ENCODE measurements at regions of chr16 and their contacts with region 1.

Region 1: DNA sequence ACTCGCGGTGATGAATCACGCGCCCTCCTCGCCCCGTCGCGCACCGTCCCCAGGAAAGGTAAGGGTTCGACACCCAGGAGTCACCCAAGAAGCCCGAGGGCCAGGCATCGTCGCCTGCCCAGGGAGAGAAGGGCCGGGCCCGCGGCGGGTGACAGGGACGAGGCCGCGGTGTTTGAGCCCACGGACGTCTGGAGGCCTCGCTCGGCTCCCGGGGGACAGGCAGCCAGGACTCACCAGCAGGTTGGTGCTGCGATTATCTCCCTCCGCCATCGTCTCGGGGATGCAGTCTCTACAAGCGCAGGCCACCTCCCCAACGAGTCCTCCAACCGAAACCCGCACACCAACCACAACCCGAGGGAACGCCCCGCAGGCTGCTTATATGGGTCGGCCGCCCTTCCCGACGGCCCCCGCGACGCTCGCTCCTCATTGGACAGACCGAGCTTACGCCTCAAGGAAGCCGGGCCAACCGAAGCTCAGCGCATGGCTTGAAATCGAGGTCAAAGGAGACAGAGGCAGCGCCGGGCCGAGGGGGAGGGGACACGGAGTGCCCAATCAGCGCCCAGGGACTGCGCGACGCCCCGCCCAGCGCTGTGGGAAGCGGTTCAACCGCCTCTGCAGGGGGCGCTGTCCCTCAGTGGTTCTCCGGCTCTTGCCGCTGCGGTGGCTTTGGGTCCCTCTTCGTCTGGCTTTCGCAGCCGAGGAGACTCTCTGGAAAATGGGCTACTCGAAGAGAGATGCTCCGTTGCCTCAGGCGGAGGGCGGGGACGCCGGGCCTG is at the start of gene ARL6IP1:
- DNase-seq: peak; percentile 99
- H3K4me3 Mint-ChIP-seq: peak within 1 kb of the TSS; percentile 98
- H3K27ac Mint-ChIP-seq: peak within 1 kb of the TSS; percentile 95
- H3K4me1 Mint-ChIP-seq: peaks cover 57% of the 10 kb centered on the region
- H3K27me3 Mint-ChIP-seq: peaks cover 2% of the 10 kb centered on the region
- total RNA-seq, gene ARL6IP1: 110 to 125 TPM

Region 2: GRCh38 chr16:18789850-18790724 is 11.3 kb before region 1 on chr16 and contains the start of gene RPS15A:
- CTCF ChIA-PET with region 1: interaction called, 90 read pairs
- POLR2A ChIA-PET with region 1: interaction called, 126 read pairs
- intact Hi-C with region 1: loop called (anchors 1 kb)
- DNase-seq: peak; percentile 96
- H3K4me3 Mint-ChIP-seq: peak within 1 kb of the TSS; percentile 97
- H3K27ac Mint-ChIP-seq: peak within 1 kb of the TSS; percentile 99
- H3K4me1 Mint-ChIP-seq: peaks cover 41% of the 10 kb centered on the region
- H3K27me3 Mint-ChIP-seq: no peaks in the 10 kb centered on the region
- total RNA-seq, gene RPS15A: 2,060 to 2,087 TPM

Region 3: DNA sequence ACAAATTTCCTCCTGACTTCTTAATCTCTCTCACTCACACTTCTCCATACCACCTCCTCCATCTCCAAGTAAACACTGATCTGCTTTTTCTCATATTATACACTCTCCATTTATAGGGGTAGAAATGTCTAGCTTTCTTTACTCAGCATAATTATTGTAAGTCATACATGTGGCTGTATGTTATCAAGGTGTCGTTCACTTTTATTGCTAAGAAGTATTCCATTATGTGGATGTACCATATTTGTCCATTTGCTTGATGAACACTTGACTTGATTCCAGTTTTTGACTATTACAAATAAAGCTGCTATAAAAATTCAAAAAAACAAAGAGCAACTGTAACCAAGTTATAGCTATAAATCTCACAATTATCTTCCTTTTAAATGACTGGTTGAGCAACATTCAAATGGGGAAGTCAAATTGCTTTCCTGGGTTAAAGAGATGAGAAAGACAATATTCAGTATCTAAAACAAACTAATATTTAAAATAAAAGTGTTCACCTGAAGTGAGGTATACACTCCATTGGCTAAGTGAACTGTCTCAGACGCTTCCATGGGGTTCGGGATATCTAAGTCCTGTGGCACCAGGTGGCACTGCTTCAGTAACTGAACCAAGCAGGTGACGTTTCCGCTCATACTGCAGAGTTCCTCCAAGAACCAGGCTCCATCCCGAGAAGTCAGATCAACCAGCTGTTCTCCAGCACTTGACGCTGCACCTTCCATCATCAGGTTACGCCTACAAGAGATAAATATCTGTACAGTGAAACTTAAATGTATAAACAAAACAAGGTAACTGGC is 32.5 kb after region 1 on chr16:
- CTCF ChIA-PET with region 1: interaction called, 12 read pairs
- POLR2A ChIA-PET with region 1: interaction called, 5 read pairs
- intact Hi-C with region 1: loop called (anchors 5 kb)
- DNase-seq: no peak
- H3K4me3 Mint-ChIP-seq: no peak overlapping the region
- H3K27ac Mint-ChIP-seq: no peak overlapping the region
- H3K4me1 Mint-ChIP-seq: peaks cover 17% of the 10 kb centered on the region
- H3K27me3 Mint-ChIP-seq: no peaks in the 10 kb centered on the region

Region 4: DNA sequence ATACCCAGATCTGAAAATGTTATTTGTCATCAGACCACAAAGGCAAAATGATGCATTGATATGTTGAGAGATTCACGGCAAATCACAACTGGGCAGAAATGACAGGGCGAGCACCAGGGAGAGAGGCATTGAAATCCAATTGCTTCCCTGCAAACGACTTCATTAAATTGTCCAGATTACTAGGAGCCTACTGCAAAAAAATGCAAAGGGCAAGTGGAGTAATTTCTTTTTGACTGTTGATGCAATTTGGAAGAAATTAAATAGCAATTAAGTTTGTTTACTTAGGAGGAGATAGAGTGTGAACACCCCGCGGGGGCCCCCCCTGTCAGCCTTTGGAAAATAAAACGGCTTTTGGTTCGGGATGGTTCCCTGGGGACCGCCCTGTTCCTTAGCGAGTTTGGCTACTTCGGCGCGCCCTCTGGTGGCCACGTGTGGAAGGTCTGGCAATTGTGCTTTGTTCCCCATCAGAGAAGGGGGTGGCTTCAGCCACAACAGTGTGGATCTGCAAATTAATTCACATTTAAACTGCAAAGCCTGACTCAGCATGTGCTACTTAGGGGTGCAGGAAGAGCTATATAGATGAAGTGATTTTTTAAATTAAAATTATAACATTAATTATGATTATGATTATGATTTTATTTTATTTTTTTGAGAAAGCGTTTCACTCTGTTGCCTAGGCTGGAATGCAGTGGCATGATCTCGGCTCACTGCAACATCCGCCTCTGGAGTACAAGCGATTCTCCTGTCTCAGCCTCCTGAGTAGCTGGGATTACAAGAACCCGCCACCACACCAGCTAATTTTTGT is 167.9 kb after region 1 on chr16:
- CTCF ChIA-PET with region 1: interaction called, 10 read pairs
- POLR2A ChIA-PET with region 1: no interaction called
- intact Hi-C with region 1: loop called (anchors 1 kb)
- DNase-seq: peak; percentile 86
- H3K4me3 Mint-ChIP-seq: peak overlapping the region; percentile 20
- H3K27ac Mint-ChIP-seq: no peak overlapping the region
- H3K4me1 Mint-ChIP-seq: peaks cover 6% of the 10 kb centered on the region
- H3K27me3 Mint-ChIP-seq: no peaks in the 10 kb centered on the region

Region 5: DNA sequence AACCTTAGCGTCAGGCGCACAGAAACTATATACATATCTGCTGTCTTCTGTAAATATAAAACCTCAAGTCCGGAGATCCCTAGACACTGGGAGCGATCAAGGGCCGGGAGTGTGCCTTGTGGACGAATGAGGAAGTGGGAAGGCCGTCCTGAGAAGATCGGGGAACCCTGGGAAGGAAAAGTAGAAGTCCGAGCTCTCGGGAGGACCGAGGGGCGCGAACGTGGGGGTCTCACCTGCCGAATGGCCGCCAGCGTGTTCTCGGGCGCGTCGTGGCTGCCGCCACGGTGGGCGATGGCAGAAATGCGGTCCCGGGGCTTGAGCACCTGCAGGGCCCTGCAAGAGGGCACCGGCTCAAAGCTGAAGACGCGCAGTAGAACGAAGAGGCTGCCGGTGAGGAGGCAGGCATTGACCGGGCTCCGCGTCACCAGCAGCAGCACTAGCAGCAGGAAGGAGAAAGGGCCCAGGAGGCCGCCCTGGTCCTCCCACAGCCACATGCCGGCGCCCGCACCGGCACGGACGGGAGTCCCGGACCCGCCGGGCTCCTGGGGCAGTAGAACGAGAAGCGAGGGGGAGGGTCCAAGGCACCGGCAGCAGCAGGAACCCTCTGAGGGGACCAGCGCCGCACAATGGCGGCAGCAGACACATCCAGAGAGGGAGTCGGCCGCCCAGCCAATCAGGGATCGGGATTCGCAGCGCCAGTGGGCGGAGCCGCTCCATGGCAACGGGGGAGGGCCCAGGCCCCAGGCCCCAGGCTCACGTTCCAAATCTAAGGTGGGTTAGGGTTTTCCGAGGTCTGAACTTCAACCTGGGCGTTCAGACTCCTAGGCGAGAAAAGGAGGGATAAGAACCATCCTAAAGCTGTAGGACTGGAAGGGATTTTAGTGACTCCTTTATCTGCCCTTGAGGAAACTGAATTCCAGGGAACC is 720.3 kb after region 1 on chr16 and contains the start of gene GDE1:
- CTCF ChIA-PET with region 1: no interaction called
- POLR2A ChIA-PET with region 1: no interaction called
- intact Hi-C with region 1: loop called (anchors 5 kb)
- DNase-seq: peak; percentile 96
- H3K4me3 Mint-ChIP-seq: peak within 1 kb of the TSS; percentile 90
- H3K27ac Mint-ChIP-seq: peak within 1 kb of the TSS; percentile 75
- H3K4me1 Mint-ChIP-seq: peaks cover 48% of the 10 kb centered on the region
- H3K27me3 Mint-ChIP-seq: no peaks in the 10 kb centered on the region
- total RNA-seq, gene GDE1: 18.4 to 19.0 TPM

Region 6: GRCh38 chr16:20073203-20074098 is 1272.1 kb after region 1 on chr16 and contains the start of gene GPR139:
- CTCF ChIA-PET with region 1: no interaction called
- POLR2A ChIA-PET with region 1: no interaction called
- intact Hi-C with region 1: no loop called
- DNase-seq: no peak
- H3K4me3 Mint-ChIP-seq: no peak within 1 kb of the TSS
- H3K27ac Mint-ChIP-seq: no peak within 1 kb of the TSS
- H3K4me1 Mint-ChIP-seq: no peaks in the 10 kb centered on the region
- H3K27me3 Mint-ChIP-seq: peaks cover 17% of the 10 kb centered on the region
- total RNA-seq, gene GPR139: not detected

Measured in activated CD4-positive, alpha-beta memory T cell treated with anti-CD3 and anti-CD28 coated beads for 36 hours (primary cell).